CD4-positive, alpha-beta T cell (primary cell): ENCODE measurements at regions of chr15 and their contacts with region 1.

Region 1: GRCh38 chr15:38486936-38487335 is 33.0 kb downstream of the FAM98B start:
- DNase-seq: peak in 3 of 14 experiments; percentile 45 to 61 (median 53)
- ATAC-seq: peak; percentile 86
- H3K4me3 ChIP-seq: no peak overlapping the region
- H3K4me3 Mint-ChIP-seq: peak overlapping the region; percentile 15
- H3K27ac ChIP-seq: peak overlapping the region; percentile 50
- H3K27ac Mint-ChIP-seq: peak overlapping the region; percentile 86
- H3K4me1 ChIP-seq: no peaks in the 10 kb centered on the region
- H3K4me1 Mint-ChIP-seq: peaks cover 52% of the 10 kb centered on the region
- H3K27me3 ChIP-seq: no peaks in the 10 kb centered on the region
- H3K27me3 Mint-ChIP-seq: no peaks in the 10 kb centered on the region
- CTCF ChIP-seq: no peak

Region 2: GRCh38 chr15:37819191-37819590 is 667.7 kb before region 1 on chr15:
- CTCF ChIA-PET with region 1: no interaction called
- POLR2A ChIA-PET with region 1: no interaction called
- intact Hi-C with region 1: no loop called
- DNase-seq: no peak
- ATAC-seq: no peak
- H3K4me3 ChIP-seq: no peak overlapping the region
- H3K4me3 Mint-ChIP-seq: no peak overlapping the region
- H3K27ac ChIP-seq: no peak overlapping the region
- H3K27ac Mint-ChIP-seq: no peak overlapping the region
- H3K4me1 ChIP-seq: no peaks in the 10 kb centered on the region
- H3K4me1 Mint-ChIP-seq: no peaks in the 10 kb centered on the region
- H3K27me3 ChIP-seq: peaks cover 0 to 2% of the 10 kb centered on the region in 2 experiments
- H3K27me3 Mint-ChIP-seq: peaks cover 2% of the 10 kb centered on the region
- CTCF ChIP-seq: no peak

Region 3: GRCh38 chr15:38536201-38536676 is 49.3 kb after region 1 on chr15:
- CTCF ChIA-PET with region 1: interaction called, 3 read pairs
- POLR2A ChIA-PET with region 1: no interaction called
- intact Hi-C with region 1: loop called in 1 of 2 experiments (anchors 10 kb)
- DNase-seq: no peak
- ATAC-seq: no peak
- H3K4me3 ChIP-seq: no peak overlapping the region
- H3K4me3 Mint-ChIP-seq: peak overlapping the region; percentile 62
- H3K27ac ChIP-seq: no peak overlapping the region
- H3K27ac Mint-ChIP-seq: peak overlapping the region; percentile 80
- H3K4me1 ChIP-seq: peaks cover 86% of the 10 kb centered on the region
- H3K4me1 Mint-ChIP-seq: peaks cover 100% of the 10 kb centered on the region
- H3K27me3 ChIP-seq: no peaks in the 10 kb centered on the region
- H3K27me3 Mint-ChIP-seq: no peaks in the 10 kb centered on the region
- CTCF ChIP-seq: no peak